Activated CD4-positive, alpha-beta T cell treated with anti-CD3 and anti-CD28 coated beads, Interleukin-2, amount 10 ng/mL, durations not matched to agents 24 days and 14 days (primary cell): ENCODE measurements at regions of chr3 and their contacts with region 1.

Region 1: DNA sequence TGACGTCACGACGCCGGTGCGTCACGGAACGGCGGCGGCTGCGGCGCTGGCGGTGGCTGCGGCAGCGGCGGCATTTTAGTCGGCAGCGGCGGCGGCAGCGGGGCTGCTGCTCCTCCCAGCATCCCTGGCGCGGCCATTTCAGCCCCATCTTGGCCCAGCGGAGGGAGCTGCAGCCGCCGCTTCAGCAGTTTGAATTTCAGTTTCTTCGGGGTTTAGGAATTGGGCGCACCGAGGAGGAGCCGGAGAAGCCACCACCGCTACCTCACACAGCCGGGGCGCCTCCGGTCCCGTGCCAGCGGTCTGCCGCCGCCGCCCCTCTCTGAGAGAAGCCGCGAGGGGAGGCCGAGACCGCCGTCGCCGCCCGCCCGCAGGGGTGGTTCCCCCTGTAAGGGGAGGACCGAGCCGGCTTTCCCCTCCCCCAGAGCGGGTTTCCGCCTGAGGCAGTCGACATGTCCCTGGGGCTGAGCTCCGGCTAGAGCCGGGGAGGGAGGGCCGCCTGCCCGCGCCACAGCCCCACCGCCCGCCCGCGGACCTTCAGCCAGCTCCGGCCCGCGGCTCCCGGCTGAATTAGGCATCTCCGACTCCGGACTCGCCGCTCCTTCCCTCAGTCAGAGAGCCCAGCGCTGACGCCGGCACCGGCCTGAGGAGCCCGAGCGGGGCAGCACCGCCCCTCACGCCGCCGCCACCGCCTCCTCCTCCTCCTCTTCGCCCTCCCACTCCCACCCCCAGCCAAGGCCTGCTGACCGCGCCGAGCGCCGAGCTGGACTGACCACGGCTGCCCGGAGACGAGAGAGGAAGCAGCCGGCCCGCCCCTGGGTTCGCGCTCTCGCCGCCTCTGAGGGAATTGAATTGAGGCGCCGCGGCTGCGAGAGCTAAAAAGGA is at the start of gene TSC22D2:
- DNase-seq: peak; percentile 99
- H3K4me3 Mint-ChIP-seq: peak within 1 kb of the TSS; percentile 81
- H3K27ac Mint-ChIP-seq: peak within 1 kb of the TSS; percentile 92
- H3K4me1 Mint-ChIP-seq: peaks cover 23% of the 10 kb centered on the region
- H3K27me3 Mint-ChIP-seq: peaks cover 8% of the 10 kb centered on the region
- total RNA-seq, gene TSC22D2: 16.4 and 18.7 TPM in 2 replicates

Region 2: DNA sequence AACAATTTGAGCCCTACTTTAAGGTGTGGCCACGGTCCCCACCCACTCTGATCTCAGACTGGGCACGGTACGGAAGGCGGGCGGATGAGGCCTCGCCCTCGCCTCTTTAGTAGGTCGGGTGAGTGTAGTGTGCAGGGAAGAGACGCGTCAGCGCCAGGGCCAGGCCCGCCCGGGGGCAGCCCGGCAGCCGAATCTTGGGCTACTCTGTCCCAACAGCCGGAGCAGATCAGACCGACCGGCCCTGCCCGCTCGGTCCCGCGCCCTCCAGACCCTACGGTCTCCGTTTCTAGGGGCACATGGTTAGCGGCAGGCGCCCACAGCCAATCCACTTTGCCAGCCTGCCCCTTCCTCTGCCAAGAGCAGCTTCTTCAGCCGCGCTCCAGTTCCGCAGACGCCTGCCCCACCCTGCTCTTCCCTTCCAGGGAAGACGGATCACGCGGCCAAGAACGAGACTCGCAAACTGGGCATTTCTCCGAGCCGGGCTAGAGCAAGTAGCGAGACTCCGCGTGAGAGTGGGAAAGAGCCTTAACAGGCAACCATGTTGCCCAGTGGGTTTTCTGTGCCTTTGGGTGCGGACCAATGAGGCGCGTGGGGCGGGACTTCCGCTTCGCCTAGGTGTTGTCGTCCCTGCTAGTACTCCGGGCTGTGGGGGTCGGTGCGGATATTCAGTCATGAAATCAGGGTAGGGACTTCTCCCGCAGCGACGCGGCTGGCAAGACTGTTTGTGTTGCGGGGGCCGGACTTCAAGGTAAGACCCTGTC is 595.7 kb before region 1 on chr3 and contains the start of gene RNF13:
- intact Hi-C with region 1: loop called (anchors 10 kb)
- DNase-seq: peak; percentile 98
- H3K4me3 Mint-ChIP-seq: peak within 1 kb of the TSS; percentile 97
- H3K27ac Mint-ChIP-seq: peak within 1 kb of the TSS; percentile 100
- H3K4me1 Mint-ChIP-seq: peaks cover 44% of the 10 kb centered on the region
- H3K27me3 Mint-ChIP-seq: peaks cover 11% of the 10 kb centered on the region
- total RNA-seq, gene RNF13: 31.6 and 36.7 TPM in 2 replicates

Region 3: DNA sequence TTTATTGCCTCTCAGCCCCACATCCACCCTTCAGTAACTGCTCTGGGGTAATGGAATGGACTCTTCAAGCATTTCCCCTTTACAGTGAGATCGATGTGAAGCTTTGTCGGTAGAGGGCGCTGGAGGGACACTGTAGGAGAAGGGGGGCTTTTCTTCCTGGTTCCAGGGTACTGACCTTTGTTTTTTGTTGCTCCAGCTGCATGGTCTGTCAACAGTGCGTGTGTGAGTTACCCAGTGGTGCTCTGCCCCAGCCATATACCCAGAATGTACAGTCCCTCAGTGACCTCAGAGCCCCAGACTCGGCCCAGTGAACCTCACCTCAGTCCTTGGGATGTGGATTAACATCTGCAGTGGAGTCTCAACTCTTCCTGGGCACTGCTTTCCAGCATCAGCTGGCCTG is 180.6 kb before region 1 on chr3:
- intact Hi-C with region 1: loop called (anchors 10 kb)
- DNase-seq: peak; percentile 73
- H3K4me3 Mint-ChIP-seq: no peak overlapping the region
- H3K27ac Mint-ChIP-seq: no peak overlapping the region
- H3K4me1 Mint-ChIP-seq: no peaks in the 10 kb centered on the region
- H3K27me3 Mint-ChIP-seq: peaks cover 33% of the 10 kb centered on the region

Region 4: GRCh38 chr3:150372722-150373121 is 35.7 kb before region 1 on chr3:
- intact Hi-C with region 1: no loop called
- DNase-seq: no peak
- H3K4me3 Mint-ChIP-seq: no peak overlapping the region
- H3K27ac Mint-ChIP-seq: no peak overlapping the region
- H3K4me1 Mint-ChIP-seq: peaks cover 7% of the 10 kb centered on the region
- H3K27me3 Mint-ChIP-seq: peaks cover 10% of the 10 kb centered on the region

Region 5: GRCh38 chr3:150495563-150496168 is 87.2 kb after region 1 on chr3:
- intact Hi-C with region 1: loop called (anchors 1 kb)
- DNase-seq: peak; percentile 72
- H3K4me3 Mint-ChIP-seq: no peak overlapping the region
- H3K27ac Mint-ChIP-seq: no peak overlapping the region
- H3K4me1 Mint-ChIP-seq: peaks cover 1% of the 10 kb centered on the region
- H3K27me3 Mint-ChIP-seq: peaks cover 11% of the 10 kb centered on the region

Region 6: GRCh38 chr3:150528354-150528797 is 119.9 kb after region 1 on chr3:
- intact Hi-C with region 1: no loop called
- DNase-seq: no peak
- H3K4me3 Mint-ChIP-seq: no peak overlapping the region
- H3K27ac Mint-ChIP-seq: no peak overlapping the region
- H3K4me1 Mint-ChIP-seq: peaks cover 6% of the 10 kb centered on the region
- H3K27me3 Mint-ChIP-seq: peaks cover 14% of the 10 kb centered on the region

Region 7: GRCh38 chr3:150603153-150603979 is 194.9 kb after region 1 on chr3 and contains the start of gene SELENOT:
- intact Hi-C with region 1: loop called (anchors 2 kb)
- DNase-seq: peak; percentile 99
- H3K4me3 Mint-ChIP-seq: peak within 1 kb of the TSS; percentile 98
- H3K27ac Mint-ChIP-seq: peak within 1 kb of the TSS; percentile 99
- H3K4me1 Mint-ChIP-seq: peaks cover 50% of the 10 kb centered on the region
- H3K27me3 Mint-ChIP-seq: no peaks in the 10 kb centered on the region
- total RNA-seq, gene SELENOT: 127 and 135 TPM in 2 replicates